CD8-positive, alpha-beta T cell (primary cell): ENCODE measurements at regions of chr2 and their contacts with region 1.

Region 1: GRCh38 chr2:64330281-64331113 is 123.5 kb upstream of the LGALSL start:
- DNase-seq: peak; percentile 52 to 88 (median 82)
- ATAC-seq: peak; percentile 15
- H3K4me3 ChIP-seq: no peak overlapping the region
- H3K4me3 Mint-ChIP-seq: peak overlapping the region; percentile 58
- H3K27ac ChIP-seq: no peak overlapping the region
- H3K27ac Mint-ChIP-seq: peak overlapping the region; percentile 52
- H3K4me1 ChIP-seq: peaks cover 28% of the 10 kb centered on the region
- H3K4me1 Mint-ChIP-seq: peaks cover 33% of the 10 kb centered on the region
- H3K27me3 ChIP-seq: no peaks in the 10 kb centered on the region
- H3K27me3 Mint-ChIP-seq: no peaks in the 10 kb centered on the region
- CTCF ChIP-seq: peak; percentile 91

Region 2: GRCh38 chr2:64018923-64019718 is 311.4 kb before region 1 on chr2 and contains the start of gene VPS54:
- CTCF ChIA-PET with region 1: interaction called, 10 read pairs
- POLR2A ChIA-PET with region 1: no interaction called
- intact Hi-C with region 1: no loop called
- DNase-seq: peak; percentile 22 to 80 (median 57)
- ATAC-seq: peak; percentile 65
- H3K4me3 ChIP-seq: peak within 1 kb of the TSS; percentile 79 to 89
- H3K4me3 Mint-ChIP-seq: peak within 1 kb of the TSS; percentile 96
- H3K27ac ChIP-seq: peak within 1 kb of the TSS; percentile 57 to 77
- H3K27ac Mint-ChIP-seq: peak within 1 kb of the TSS; percentile 97
- H3K4me1 ChIP-seq: peaks cover 31% of the 10 kb centered on the region
- H3K4me1 Mint-ChIP-seq: peaks cover 46% of the 10 kb centered on the region
- H3K27me3 ChIP-seq: no peaks in the 10 kb centered on the region
- H3K27me3 Mint-ChIP-seq: no peaks in the 10 kb centered on the region
- CTCF ChIP-seq: no peak
- total RNA-seq, gene VPS54: 7.0 to 8.5 TPM

Region 3: GRCh38 chr2:64144057-64145013 is 186.2 kb before region 1 on chr2 and contains the start of gene PELI1:
- CTCF ChIA-PET with region 1: interaction called, 16 read pairs
- POLR2A ChIA-PET with region 1: interaction called, 25 read pairs
- intact Hi-C with region 1: loop called (anchors 1 to 2 kb)
- DNase-seq: peak; percentile 86 to 94 (median 91)
- ATAC-seq: peak; percentile 93
- H3K4me3 ChIP-seq: peak within 1 kb of the TSS; percentile 86 to 87
- H3K4me3 Mint-ChIP-seq: peak within 1 kb of the TSS; percentile 98
- H3K27ac ChIP-seq: peak within 1 kb of the TSS; percentile 78 to 91
- H3K27ac Mint-ChIP-seq: peak within 1 kb of the TSS; percentile 99
- H3K4me1 ChIP-seq: peaks cover 13% of the 10 kb centered on the region
- H3K4me1 Mint-ChIP-seq: peaks cover 34% of the 10 kb centered on the region
- H3K27me3 ChIP-seq: no peaks in the 10 kb centered on the region
- H3K27me3 Mint-ChIP-seq: no peaks in the 10 kb centered on the region
- CTCF ChIP-seq: no peak
- total RNA-seq, gene PELI1: 213 to 216 TPM

Region 4: GRCh38 chr2:64298161-64298560 is 32.3 kb before region 1 on chr2:
- CTCF ChIA-PET with region 1: interaction called, 10 read pairs
- POLR2A ChIA-PET with region 1: no interaction called
- intact Hi-C with region 1: no loop called
- DNase-seq: no peak
- ATAC-seq: no peak
- H3K4me3 ChIP-seq: no peak overlapping the region
- H3K4me3 Mint-ChIP-seq: no peak overlapping the region
- H3K27ac ChIP-seq: no peak overlapping the region
- H3K27ac Mint-ChIP-seq: no peak overlapping the region
- H3K4me1 ChIP-seq: no peaks in the 10 kb centered on the region
- H3K4me1 Mint-ChIP-seq: peaks cover 11% of the 10 kb centered on the region
- H3K27me3 ChIP-seq: no peaks in the 10 kb centered on the region
- H3K27me3 Mint-ChIP-seq: no peaks in the 10 kb centered on the region
- CTCF ChIP-seq: no peak

Region 5: GRCh38 chr2:64488050-64488974 is 157.8 kb after region 1 on chr2:
- CTCF ChIA-PET with region 1: interaction called, 345 read pairs
- POLR2A ChIA-PET with region 1: interaction called, 23 read pairs
- intact Hi-C with region 1: loop called (anchors 1 kb)
- DNase-seq: peak; percentile 56 to 87 (median 79)
- ATAC-seq: peak; percentile 82
- H3K4me3 ChIP-seq: no peak overlapping the region
- H3K4me3 Mint-ChIP-seq: no peak overlapping the region
- H3K27ac ChIP-seq: no peak overlapping the region
- H3K27ac Mint-ChIP-seq: no peak overlapping the region
- H3K4me1 ChIP-seq: no peaks in the 10 kb centered on the region
- H3K4me1 Mint-ChIP-seq: peaks cover 11% of the 10 kb centered on the region
- H3K27me3 ChIP-seq: no peaks in the 10 kb centered on the region
- H3K27me3 Mint-ChIP-seq: peaks cover 6% of the 10 kb centered on the region
- CTCF ChIP-seq: peak; percentile 97

Region 6: DNA sequence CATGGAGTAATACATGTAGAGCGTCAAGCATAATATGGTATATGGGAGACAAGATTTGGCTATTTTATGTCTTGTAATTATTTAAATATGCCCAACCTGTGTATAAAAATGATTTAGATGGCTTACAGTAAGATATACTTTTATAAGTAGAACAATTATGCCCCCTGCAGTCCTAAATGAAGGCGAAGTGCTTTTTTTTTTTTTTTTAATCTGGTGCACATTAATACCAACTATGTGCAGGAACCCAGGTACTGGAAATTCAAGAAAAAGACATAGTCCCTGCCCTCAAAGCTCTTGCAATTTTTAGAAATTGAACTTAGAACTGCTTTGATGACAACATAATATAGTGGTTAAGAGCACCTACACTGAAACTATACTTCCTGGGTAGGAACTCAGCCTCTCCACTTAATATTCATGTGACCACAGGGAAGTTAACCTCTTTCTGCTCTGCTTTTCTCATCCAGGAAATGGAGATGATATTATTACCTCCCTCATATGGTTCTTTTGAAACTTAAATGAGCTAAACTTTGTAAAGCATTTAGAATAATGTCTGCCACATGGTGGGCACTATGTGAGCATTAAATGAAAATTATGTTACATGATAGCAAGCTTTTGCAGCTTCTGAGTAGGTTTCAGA is 231.8 kb after region 1 on chr2:
- CTCF ChIA-PET with region 1: interaction called, 31 read pairs
- POLR2A ChIA-PET with region 1: no interaction called
- intact Hi-C with region 1: loop called (anchors 1 kb)
- DNase-seq: peak in 2 of 9 experiments; percentile 46 to 61
- ATAC-seq: peak; percentile 78
- H3K4me3 ChIP-seq: no peak overlapping the region
- H3K4me3 Mint-ChIP-seq: no peak overlapping the region
- H3K27ac ChIP-seq: no peak overlapping the region
- H3K27ac Mint-ChIP-seq: no peak overlapping the region
- H3K4me1 ChIP-seq: peaks cover 14% of the 10 kb centered on the region
- H3K4me1 Mint-ChIP-seq: peaks cover 30% of the 10 kb centered on the region
- H3K27me3 ChIP-seq: no peaks in the 10 kb centered on the region
- H3K27me3 Mint-ChIP-seq: no peaks in the 10 kb centered on the region
- CTCF ChIP-seq: peak; percentile 58

Region 7: GRCh38 chr2:64873472-64873924 is 543.0 kb after region 1 on chr2:
- CTCF ChIA-PET with region 1: interaction called, 16 read pairs
- POLR2A ChIA-PET with region 1: no interaction called
- intact Hi-C with region 1: loop called (anchors 1 to 2 kb)
- DNase-seq: peak; percentile 59 to 88 (median 78)
- ATAC-seq: peak; percentile 99
- H3K4me3 ChIP-seq: peak overlapping the region in 1 of 2 experiments; percentile 13
- H3K4me3 Mint-ChIP-seq: peak overlapping the region; percentile 20
- H3K27ac ChIP-seq: no peak overlapping the region
- H3K27ac Mint-ChIP-seq: no peak overlapping the region
- H3K4me1 ChIP-seq: peaks cover 4% of the 10 kb centered on the region
- H3K4me1 Mint-ChIP-seq: peaks cover 6% of the 10 kb centered on the region
- H3K27me3 ChIP-seq: no peaks in the 10 kb centered on the region
- H3K27me3 Mint-ChIP-seq: peaks cover 4% of the 10 kb centered on the region
- CTCF ChIP-seq: peak; percentile 88